T-cell (primary cell): ENCODE measurements at regions of chr3 and their contacts with region 1.

Region 1: DNA sequence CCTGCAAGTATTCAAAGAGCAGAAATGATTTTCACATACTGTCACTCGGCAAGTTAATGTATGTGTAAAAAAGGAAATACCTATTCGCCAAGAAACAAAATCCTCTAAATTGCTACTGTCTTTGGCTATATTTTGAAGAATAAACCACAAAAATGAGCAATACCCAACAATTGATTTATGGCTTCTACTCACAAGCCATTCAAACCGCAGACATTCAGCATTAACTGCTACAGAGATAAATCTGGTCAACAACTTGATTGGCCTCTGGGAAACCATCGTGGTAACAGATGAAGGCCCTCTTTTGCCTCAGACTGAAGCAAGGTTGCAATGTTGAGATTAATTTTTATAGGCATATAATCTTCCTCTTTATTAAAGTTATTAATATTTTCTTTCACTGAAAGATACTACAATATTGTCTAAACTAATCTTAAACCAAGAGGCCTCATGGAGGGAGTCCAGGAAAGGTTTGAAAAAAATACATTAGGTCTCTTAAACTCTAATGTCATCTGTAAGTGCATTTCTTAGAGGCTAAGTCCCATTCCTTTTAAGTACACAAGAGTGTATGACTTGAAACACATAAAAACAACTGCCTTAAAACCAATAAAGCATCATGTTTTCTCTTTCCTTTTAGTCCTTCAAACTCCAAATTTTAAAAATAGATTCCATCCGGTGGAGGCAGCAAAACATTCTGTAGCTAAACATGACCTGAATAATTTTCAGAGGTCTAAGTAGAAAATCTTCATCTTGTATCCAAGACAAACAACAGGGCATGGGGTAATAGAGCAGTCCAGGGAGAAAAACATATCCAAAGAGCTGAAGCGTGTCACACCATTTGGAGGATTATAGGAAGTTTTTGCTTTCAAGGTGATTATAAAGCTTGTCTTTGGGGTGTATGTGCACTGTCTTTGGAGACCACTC is 162.4 kb upstream of the TGFBR2 start:
- DNase-seq: no peak
- ATAC-seq: no peak
- H3K4me3 ChIP-seq: no peak overlapping the region
- H3K4me3 Mint-ChIP-seq: no peak overlapping the region
- H3K27ac ChIP-seq: no peak overlapping the region
- H3K27ac Mint-ChIP-seq: no peak overlapping the region
- H3K4me1 ChIP-seq: no peaks in the 10 kb centered on the region
- H3K4me1 Mint-ChIP-seq: peaks cover 0 to 24% (median 0%) of the 10 kb centered on the region in 3 donors
- H3K27me3 ChIP-seq: no peaks in the 10 kb centered on the region
- H3K27me3 Mint-ChIP-seq: no peaks in the 10 kb centered on the region

Region 2: DNA sequence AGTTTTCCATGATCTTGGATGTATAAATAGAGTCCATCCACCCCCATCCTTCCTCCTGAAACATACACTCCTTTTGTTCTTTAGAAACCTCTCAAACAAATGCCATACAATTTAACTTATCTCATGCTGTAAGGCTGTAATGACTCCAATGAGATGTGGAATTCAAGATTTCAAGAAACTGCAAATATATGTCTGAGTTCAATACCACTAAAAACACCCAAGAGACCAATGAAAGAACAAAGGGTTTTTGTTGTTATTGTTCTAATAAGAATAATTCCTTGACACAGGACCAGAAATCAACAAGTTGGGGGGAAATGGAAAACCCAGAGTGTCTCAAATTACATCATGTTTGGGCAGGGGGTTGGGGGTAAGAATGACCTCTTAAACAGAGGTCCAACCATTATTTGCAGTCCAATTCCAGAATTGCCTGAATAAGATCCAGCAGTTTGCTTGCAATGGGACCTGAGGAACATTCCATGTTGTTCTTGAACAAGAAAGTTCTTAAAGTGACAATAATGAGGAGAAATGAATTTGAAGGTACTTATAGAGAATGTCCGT is 113.8 kb after region 1 on chr3:
- CTCF ChIA-PET with region 1: interaction called in 1 of 2 experiments, 10 read pairs
- POLR2A ChIA-PET with region 1: no interaction called
- DNase-seq: no peak
- ATAC-seq: no peak
- H3K4me3 ChIP-seq: no peak overlapping the region
- H3K4me3 Mint-ChIP-seq: no peak overlapping the region
- H3K27ac ChIP-seq: no peak overlapping the region
- H3K27ac Mint-ChIP-seq: no peak overlapping the region
- H3K4me1 ChIP-seq: no peaks in the 10 kb centered on the region
- H3K4me1 Mint-ChIP-seq: no peaks in the 10 kb centered on the region
- H3K27me3 ChIP-seq: no peaks in the 10 kb centered on the region
- H3K27me3 Mint-ChIP-seq: no peaks in the 10 kb centered on the region